CD14-positive monocyte (primary cell): ENCODE measurements at regions of chr6 and their contacts with region 1.

Region 1: DNA sequence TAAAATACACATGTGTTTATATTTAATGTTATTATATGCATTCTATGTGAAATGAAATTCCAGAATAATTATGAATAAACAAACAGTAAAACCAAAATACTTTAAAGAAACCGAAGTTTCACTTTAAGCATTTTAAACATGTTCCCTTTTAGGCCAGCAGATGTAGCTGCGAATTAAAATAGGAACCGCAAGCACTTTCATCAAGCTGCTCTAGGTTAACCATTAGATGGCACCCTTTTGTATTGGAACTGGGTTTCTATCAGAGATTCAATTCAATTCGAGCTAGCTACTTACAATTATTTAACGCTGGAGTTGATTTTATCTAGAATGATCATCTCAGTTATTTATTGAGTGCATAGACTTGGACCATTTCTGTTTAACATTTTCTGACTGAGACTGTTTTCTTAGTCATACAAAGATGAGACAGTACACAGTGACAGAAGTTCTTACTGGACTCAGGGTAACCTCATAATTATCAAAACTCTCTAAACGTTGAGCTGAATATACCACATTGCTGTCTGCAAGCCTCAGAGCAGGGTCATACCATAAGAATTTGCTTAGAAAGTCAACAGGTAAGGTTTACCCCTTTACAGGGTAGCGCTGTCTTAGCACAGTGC is 8.5 kb downstream of the TMEM242 start:
- DNase-seq: peak; percentile 38 to 66 (median 62)
- H3K4me3 ChIP-seq: no peak overlapping the region
- H3K4me3 Mint-ChIP-seq: no peak overlapping the region
- H3K27ac ChIP-seq: peak overlapping the region in 1 of 2 donors; percentile 17
- H3K27ac Mint-ChIP-seq: no peak overlapping the region
- H3K4me1 ChIP-seq: peaks cover 21 to 22% of the 10 kb centered on the region in 2 donors
- H3K4me1 Mint-ChIP-seq: peaks cover 19% of the 10 kb centered on the region
- H3K27me3 ChIP-seq: no peaks in the 10 kb centered on the region
- H3K27me3 Mint-ChIP-seq: no peaks in the 10 kb centered on the region
- CTCF ChIP-seq: peak; percentile 85

Region 2: GRCh38 chr6:157258878-157259277 is 55.9 kb before region 1 on chr6:
- intact Hi-C with region 1: no loop called
- DNase-seq: no peak
- H3K4me3 ChIP-seq: no peak overlapping the region
- H3K4me3 Mint-ChIP-seq: no peak overlapping the region
- H3K27ac ChIP-seq: no peak overlapping the region
- H3K27ac Mint-ChIP-seq: no peak overlapping the region
- H3K4me1 ChIP-seq: no peaks in the 10 kb centered on the region
- H3K4me1 Mint-ChIP-seq: no peaks in the 10 kb centered on the region
- H3K27me3 ChIP-seq: no peaks in the 10 kb centered on the region
- H3K27me3 Mint-ChIP-seq: peaks cover 2 to 17% (median 3%) of the 10 kb centered on the region in 3 donors
- CTCF ChIP-seq: no peak

Region 3: GRCh38 chr6:157281570-157281969 is 33.2 kb before region 1 on chr6:
- intact Hi-C with region 1: no loop called
- DNase-seq: peak in 2 of 3 donors; percentile 5 to 28
- H3K4me3 ChIP-seq: no peak overlapping the region
- H3K4me3 Mint-ChIP-seq: no peak overlapping the region
- H3K27ac ChIP-seq: no peak overlapping the region
- H3K27ac Mint-ChIP-seq: peak overlapping the region in 1 of 7 donors; percentile 2
- H3K4me1 ChIP-seq: no peaks in the 10 kb centered on the region
- H3K4me1 Mint-ChIP-seq: no peaks in the 10 kb centered on the region
- H3K27me3 ChIP-seq: no peaks in the 10 kb centered on the region
- H3K27me3 Mint-ChIP-seq: peaks cover 8 to 10% (median 9%) of the 10 kb centered on the region in 3 donors
- CTCF ChIP-seq: peak; percentile 13

Region 4: GRCh38 chr6:157358287-157358686 is 43.5 kb after region 1 on chr6:
- intact Hi-C with region 1: no loop called
- DNase-seq: no peak
- H3K4me3 ChIP-seq: no peak overlapping the region
- H3K4me3 Mint-ChIP-seq: no peak overlapping the region
- H3K27ac ChIP-seq: no peak overlapping the region
- H3K27ac Mint-ChIP-seq: no peak overlapping the region
- H3K4me1 ChIP-seq: no peaks in the 10 kb centered on the region
- H3K4me1 Mint-ChIP-seq: no peaks in the 10 kb centered on the region
- H3K27me3 ChIP-seq: no peaks in the 10 kb centered on the region
- H3K27me3 Mint-ChIP-seq: peaks cover under 1 to 4% (median 2%) of the 10 kb centered on the region in 3 donors
- CTCF ChIP-seq: no peak

Region 5: GRCh38 chr6:157379656-157380454 is 65.0 kb after region 1 on chr6:
- intact Hi-C with region 1: loop called (anchors 2 to 5 kb)
- DNase-seq: peak; percentile 79 to 81 (median 80)
- H3K4me3 ChIP-seq: peak overlapping the region; percentile 85 to 97 (median 93)
- H3K4me3 Mint-ChIP-seq: peak overlapping the region; percentile 81 to 89
- H3K27ac ChIP-seq: peak overlapping the region; percentile 58 to 86
- H3K27ac Mint-ChIP-seq: peak overlapping the region in 6 of 7 donors; percentile 33 to 87 (median 82)
- H3K4me1 ChIP-seq: peaks cover 19 to 20% of the 10 kb centered on the region in 2 donors
- H3K4me1 Mint-ChIP-seq: peaks cover 30% of the 10 kb centered on the region
- H3K27me3 ChIP-seq: no peaks in the 10 kb centered on the region
- H3K27me3 Mint-ChIP-seq: peaks cover 3 to 12% (median 5%) of the 10 kb centered on the region in 3 donors
- CTCF ChIP-seq: no peak

Region 6: DNA sequence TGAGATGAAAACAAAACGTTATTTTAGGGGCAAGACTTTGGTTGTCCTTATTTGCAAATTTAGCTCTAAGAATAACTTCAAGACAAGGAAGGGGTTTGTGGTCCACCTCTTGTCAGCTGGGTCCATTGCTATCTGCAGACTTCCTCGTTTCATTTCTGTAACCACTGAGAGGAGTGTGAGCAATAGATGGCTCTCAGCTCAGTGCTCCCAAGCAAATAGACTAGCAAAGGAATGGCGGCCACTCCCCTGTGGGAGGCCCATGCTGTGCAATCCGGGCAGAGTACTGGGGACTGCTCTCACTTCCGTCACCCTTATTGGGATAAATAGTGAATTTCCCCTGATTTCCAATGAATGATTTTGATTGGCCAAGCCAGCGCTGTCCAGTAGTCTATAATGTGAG is 242.7 kb after region 1 on chr6:
- intact Hi-C with region 1: no loop called
- DNase-seq: no peak
- H3K4me3 ChIP-seq: no peak overlapping the region
- H3K4me3 Mint-ChIP-seq: peak overlapping the region in 1 of 2 donors; percentile 51
- H3K27ac ChIP-seq: no peak overlapping the region
- H3K27ac Mint-ChIP-seq: no peak overlapping the region
- H3K4me1 ChIP-seq: peaks cover 12 to 14% of the 10 kb centered on the region in 2 donors
- H3K4me1 Mint-ChIP-seq: peaks cover 21% of the 10 kb centered on the region
- H3K27me3 ChIP-seq: no peaks in the 10 kb centered on the region
- H3K27me3 Mint-ChIP-seq: peaks cover 0 to 5% (median 2%) of the 10 kb centered on the region in 3 donors
- CTCF ChIP-seq: no peak

Region 7: DNA sequence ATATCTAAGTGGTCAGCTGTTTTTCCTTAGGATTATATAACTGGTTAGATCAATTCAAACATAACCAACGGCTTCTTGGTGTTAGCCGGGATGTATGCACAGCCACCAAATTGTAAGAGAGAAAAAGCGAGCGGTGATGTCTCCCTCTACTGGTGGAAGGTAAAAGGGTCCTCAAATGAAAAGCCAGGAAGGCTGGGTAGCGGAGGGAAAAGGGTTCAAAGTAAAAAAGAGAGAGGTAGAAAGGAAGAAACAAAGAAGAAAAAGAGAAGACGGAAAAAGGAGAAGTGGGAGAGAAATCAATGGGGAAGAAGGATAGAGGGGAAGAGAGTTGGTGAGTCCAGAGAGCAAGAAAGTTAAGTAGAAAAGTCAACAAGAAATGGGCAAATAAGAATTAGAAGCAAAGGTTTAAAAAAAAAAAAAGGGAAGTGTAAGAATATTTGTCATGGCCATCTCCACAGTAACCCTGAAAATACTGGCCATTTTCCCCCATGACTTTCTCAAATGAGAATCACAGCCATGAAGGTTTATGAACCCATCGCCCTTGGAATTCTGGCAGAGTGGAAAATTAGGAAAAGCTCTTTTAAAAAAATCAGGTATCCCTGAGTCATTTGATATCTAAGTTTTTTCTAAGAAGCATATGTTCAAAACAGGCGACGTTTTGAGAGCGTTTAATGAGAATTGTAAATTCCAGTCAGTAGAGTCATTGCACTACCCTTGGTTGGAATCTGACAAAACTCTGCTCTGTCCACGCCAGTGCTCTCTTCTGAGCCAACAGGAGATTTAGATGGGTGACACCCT is 352.6 kb after region 1 on chr6:
- intact Hi-C with region 1: loop called (anchors 5 kb)
- DNase-seq: peak; percentile 44 to 60 (median 60)
- H3K4me3 ChIP-seq: peak overlapping the region in 1 of 3 experiments; percentile 45
- H3K4me3 Mint-ChIP-seq: peak overlapping the region; percentile 63 to 68
- H3K27ac ChIP-seq: peak overlapping the region in 1 of 2 donors; percentile 46
- H3K27ac Mint-ChIP-seq: peak overlapping the region; percentile 73 to 95 (median 88)
- H3K4me1 ChIP-seq: peaks cover 24 to 28% of the 10 kb centered on the region in 2 donors
- H3K4me1 Mint-ChIP-seq: peaks cover 27% of the 10 kb centered on the region
- H3K27me3 ChIP-seq: no peaks in the 10 kb centered on the region
- H3K27me3 Mint-ChIP-seq: no peaks in the 10 kb centered on the region
- CTCF ChIP-seq: peak; percentile 96